ENCODE measurements at regions of chr17 and their contacts with region 1.

Region 1: DNA sequence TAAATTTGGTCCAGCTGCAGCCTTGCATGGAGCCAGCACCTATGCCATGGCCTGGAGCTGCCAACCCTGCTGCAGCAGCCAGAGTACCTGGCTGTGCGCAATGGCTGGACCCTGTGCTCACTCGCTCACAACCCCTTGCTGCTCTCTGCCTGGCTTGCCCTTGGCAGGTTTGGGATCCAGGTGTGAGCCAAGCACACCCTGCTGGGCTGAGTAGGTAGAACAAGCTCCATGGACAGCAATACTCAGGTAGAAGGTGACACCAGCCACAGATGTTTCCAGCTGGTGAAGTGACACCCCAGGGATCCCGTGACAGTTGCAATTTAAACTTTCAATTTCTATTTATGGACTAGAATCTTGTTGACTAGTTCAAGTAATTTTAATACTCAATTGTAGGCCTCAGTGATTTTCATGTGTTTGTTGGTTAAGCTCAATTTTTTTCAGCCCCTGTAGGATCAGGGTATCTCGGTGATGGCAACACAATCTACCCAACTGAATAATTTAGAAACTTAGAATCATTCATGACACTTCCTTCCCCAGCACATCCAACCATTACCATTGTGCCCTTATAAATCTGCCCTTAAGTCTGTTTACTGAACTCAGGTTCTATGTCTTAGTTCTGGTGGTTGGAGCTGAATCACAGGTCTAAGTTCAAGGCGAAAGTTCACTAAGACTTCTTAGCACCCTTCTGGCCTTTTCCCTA is 480.0 kb downstream of the PMP22 start:
- DNase-seq: peak in 8 of 9 donors; percentile 12 to 58 (median 40)
- ATAC-seq: peak; percentile 51
- H3K4me3 ChIP-seq: no peak overlapping the region
- H3K4me3 Mint-ChIP-seq: no peak overlapping the region
- H3K27ac ChIP-seq: no peak overlapping the region
- H3K27ac Mint-ChIP-seq: no peak overlapping the region
- H3K4me1 ChIP-seq: no peaks in the 10 kb centered on the region
- H3K4me1 Mint-ChIP-seq: no peaks in the 10 kb centered on the region
- H3K27me3 ChIP-seq: no peaks in the 10 kb centered on the region
- H3K27me3 Mint-ChIP-seq: peaks cover 0 to 18% (median 13%) of the 10 kb centered on the region in 5 donors

Region 2: DNA sequence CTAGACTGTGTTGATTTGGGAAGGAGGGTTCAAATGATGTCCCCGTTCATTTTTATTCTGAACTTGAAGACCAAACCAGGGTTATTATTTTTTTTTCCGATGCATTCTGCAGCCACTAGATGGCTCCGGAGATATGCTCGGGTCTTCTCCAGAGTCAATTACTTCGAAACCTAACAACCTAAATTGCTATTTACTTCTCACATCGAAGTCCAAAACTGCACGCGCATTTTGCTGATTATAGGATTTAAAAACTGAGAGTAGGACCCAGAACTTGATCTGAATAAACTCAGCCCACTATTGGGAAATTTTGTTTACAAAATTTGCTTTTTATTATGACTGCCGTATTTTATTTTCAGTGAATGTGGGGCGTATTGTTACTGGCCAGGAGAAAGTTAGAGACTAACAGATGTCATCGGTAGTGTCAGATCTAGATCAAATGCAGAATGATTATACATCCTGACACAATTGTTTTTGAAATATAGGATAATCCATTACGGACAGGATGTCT is 1447.2 kb before region 1 on chr17:
- CTCF ChIA-PET with region 1: no interaction called
- POLR2A ChIA-PET with region 1: no interaction called
- intact Hi-C with region 1: loop called in 1 of 2 experiments (anchors 5 kb)
- DNase-seq: peak in 5 of 9 donors; percentile 4 to 22 (median 16)
- ATAC-seq: no peak
- H3K4me3 ChIP-seq: no peak overlapping the region
- H3K4me3 Mint-ChIP-seq: peak overlapping the region in 7 of 10 donors; percentile 28 to 63 (median 51)
- H3K27ac ChIP-seq: no peak overlapping the region
- H3K27ac Mint-ChIP-seq: no peak overlapping the region
- H3K4me1 ChIP-seq: no peaks in the 10 kb centered on the region
- H3K4me1 Mint-ChIP-seq: peaks cover 0 to 7% (median 3%) of the 10 kb centered on the region in 7 donors
- H3K27me3 ChIP-seq: peaks cover 0 to 5% of the 10 kb centered on the region in 2 donors
- H3K27me3 Mint-ChIP-seq: peaks cover 9 to 54% (median 30%) of the 10 kb centered on the region in 5 donors

Region 3: GRCh38 chr17:14294876-14295275 is 490.3 kb before region 1 on chr17:
- CTCF ChIA-PET with region 1: interaction called, 8 read pairs
- POLR2A ChIA-PET with region 1: no interaction called
- intact Hi-C with region 1: loop called in 1 of 2 experiments (anchors 1 kb)
- DNase-seq: no peak
- ATAC-seq: no peak
- H3K4me3 ChIP-seq: no peak overlapping the region
- H3K4me3 Mint-ChIP-seq: peak overlapping the region in 1 of 10 donors; percentile 18
- H3K27ac ChIP-seq: no peak overlapping the region
- H3K27ac Mint-ChIP-seq: no peak overlapping the region
- H3K4me1 ChIP-seq: peaks cover 15 to 16% of the 10 kb centered on the region in 2 donors
- H3K4me1 Mint-ChIP-seq: peaks cover 27 to 44% (median 39%) of the 10 kb centered on the region in 7 donors
- H3K27me3 ChIP-seq: peaks cover 19 to 22% of the 10 kb centered on the region in 2 donors
- H3K27me3 Mint-ChIP-seq: peaks cover 59 to 79% (median 75%) of the 10 kb centered on the region in 5 donors

Region 4: DNA sequence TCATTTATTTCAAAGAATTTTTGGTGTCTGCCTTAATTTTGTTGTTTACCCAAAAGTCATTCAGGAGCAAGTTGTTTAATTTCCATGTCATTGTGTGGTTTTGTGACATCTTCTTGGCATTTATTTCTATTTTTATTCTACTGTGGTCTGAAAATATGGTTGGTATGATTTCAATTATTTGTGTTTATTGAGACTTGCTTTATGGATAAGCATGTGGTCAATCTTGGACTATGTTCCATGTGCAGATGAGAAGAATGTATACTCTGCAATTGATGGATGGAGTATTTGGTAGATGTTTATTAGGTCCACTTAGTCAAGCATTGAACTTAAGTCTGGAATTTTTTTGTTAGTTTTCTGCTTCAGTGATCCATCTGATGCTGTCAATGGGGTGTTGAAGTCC is 97.0 kb after region 1 on chr17:
- CTCF ChIA-PET with region 1: no interaction called
- POLR2A ChIA-PET with region 1: no interaction called
- intact Hi-C with region 1: no loop called
- DNase-seq: no peak
- ATAC-seq: no peak
- H3K4me3 ChIP-seq: no peak overlapping the region
- H3K4me3 Mint-ChIP-seq: no peak overlapping the region
- H3K27ac ChIP-seq: no peak overlapping the region
- H3K27ac Mint-ChIP-seq: no peak overlapping the region
- H3K4me1 ChIP-seq: no peaks in the 10 kb centered on the region
- H3K4me1 Mint-ChIP-seq: no peaks in the 10 kb centered on the region
- H3K27me3 ChIP-seq: no peaks in the 10 kb centered on the region
- H3K27me3 Mint-ChIP-seq: peaks cover 0 to 27% (median 20%) of the 10 kb centered on the region in 5 donors

Measured in naive thymus-derived CD4-positive, alpha-beta T cell (primary cell).